PC-3 (cell line): ENCODE measurements at regions of chr13 and their contacts with region 1.

Region 1: GRCh38 chr13:30132623-30133553 is 174.5 kb downstream of the KATNAL1 start:
- DNase-seq: peak; percentile 88
- ATAC-seq: peak; percentile 89
- H3K4me3 ChIP-seq: no peak overlapping the region
- H3K27ac ChIP-seq: no peak overlapping the region
- H3K4me1 ChIP-seq: peaks cover 7% of the 10 kb centered on the region
- H3K27me3 ChIP-seq: no peaks in the 10 kb centered on the region
- CTCF ChIP-seq: peak; percentile 83

Region 2: DNA sequence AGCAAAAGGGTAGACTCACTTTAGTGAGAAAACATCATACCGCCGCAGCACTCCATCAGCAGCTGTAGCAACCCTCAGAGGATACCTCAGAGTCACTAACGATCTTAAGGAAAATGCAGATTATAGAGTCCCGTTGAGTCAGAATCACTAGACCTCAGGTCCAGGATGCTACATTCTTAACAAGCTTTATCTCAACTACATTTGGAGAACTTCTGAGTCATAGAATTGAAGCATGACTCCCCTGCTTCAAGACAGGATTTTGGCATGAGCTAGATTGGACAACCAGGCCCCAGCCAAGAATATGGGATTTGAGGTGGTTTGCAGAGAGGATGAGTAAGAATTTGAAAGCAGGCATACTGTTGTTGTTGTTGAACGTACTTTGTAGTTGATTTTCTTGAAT is 163.6 kb before region 1 on chr13:
- CTCF ChIA-PET with region 1: no interaction called
- POLR2A ChIA-PET with region 1: no interaction called
- intact Hi-C with region 1: no loop called
- DNase-seq: peak; percentile 74
- ATAC-seq: peak; percentile 68
- H3K4me3 ChIP-seq: no peak overlapping the region
- H3K27ac ChIP-seq: peak overlapping the region; percentile 45; the same call in 1 of the 2 replicates
- H3K4me1 ChIP-seq: peaks cover 7% of the 10 kb centered on the region; the same call in 1 of the 2 replicates
- H3K27me3 ChIP-seq: no peaks in the 10 kb centered on the region
- CTCF ChIP-seq: no peak

Region 3: GRCh38 chr13:30158774-30159445 is 26.0 kb after region 1 on chr13:
- CTCF ChIA-PET with region 1: interaction called, 8 read pairs
- POLR2A ChIA-PET with region 1: interaction called, 4 read pairs
- intact Hi-C with region 1: loop called (anchors 1 kb)
- DNase-seq: peak; percentile 35
- ATAC-seq: peak; percentile 78
- H3K4me3 ChIP-seq: no peak overlapping the region
- H3K27ac ChIP-seq: no peak overlapping the region
- H3K4me1 ChIP-seq: peaks cover 6% of the 10 kb centered on the region; the same call in 1 of the 2 replicates
- H3K27me3 ChIP-seq: no peaks in the 10 kb centered on the region
- CTCF ChIP-seq: peak; percentile 51

Region 4: DNA sequence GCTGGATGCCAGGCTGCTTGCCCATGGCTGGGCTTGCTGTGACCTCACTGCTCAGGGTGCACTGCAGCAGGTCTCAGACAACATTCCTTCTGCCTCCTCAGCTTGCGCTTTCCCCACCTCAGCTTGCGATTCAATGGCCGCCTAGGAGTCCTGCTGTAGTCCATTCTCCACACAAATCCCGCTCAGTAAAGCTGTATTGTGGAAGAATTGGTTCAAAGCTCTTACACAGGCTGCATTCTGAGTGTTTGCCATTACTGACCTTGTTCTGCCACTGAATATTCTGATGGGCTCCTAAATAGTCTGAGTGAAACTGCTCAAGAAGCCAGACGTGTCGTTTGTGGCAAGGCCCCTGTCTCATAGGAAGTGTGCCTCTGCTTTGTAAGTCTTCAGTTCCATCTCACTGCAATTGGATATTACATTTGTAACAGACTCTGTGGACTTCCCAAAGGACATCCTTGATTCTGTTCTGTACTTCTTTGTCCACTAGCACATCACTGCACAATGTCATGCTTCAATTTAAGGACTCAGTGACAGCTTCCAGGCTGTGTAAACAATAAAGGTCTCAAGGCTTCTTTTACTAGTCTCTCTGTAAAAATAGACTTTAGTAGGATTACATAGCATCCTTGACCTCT is 124.7 kb after region 1 on chr13:
- CTCF ChIA-PET with region 1: no interaction called
- POLR2A ChIA-PET with region 1: no interaction called
- intact Hi-C with region 1: no loop called
- DNase-seq: no peak
- ATAC-seq: peak; percentile 70
- H3K4me3 ChIP-seq: no peak overlapping the region
- H3K27ac ChIP-seq: no peak overlapping the region
- H3K4me1 ChIP-seq: no peaks in the 10 kb centered on the region
- H3K27me3 ChIP-seq: no peaks in the 10 kb centered on the region
- CTCF ChIP-seq: no peak

Region 5: GRCh38 chr13:30395192-30396084 is 262.6 kb after region 1 on chr13:
- CTCF ChIA-PET with region 1: no interaction called
- POLR2A ChIA-PET with region 1: no interaction called
- intact Hi-C with region 1: loop called (anchors 2 kb)
- DNase-seq: peak; percentile 79
- ATAC-seq: peak; percentile 84
- H3K4me3 ChIP-seq: peak overlapping the region; percentile 78
- H3K27ac ChIP-seq: peak overlapping the region; percentile 46
- H3K4me1 ChIP-seq: peaks cover 5% of the 10 kb centered on the region
- H3K27me3 ChIP-seq: no peaks in the 10 kb centered on the region
- CTCF ChIP-seq: no peak